Dendritic cell treated with granulocyte-macrophage colony-stimulating factor and Interleukin-4, amounts not matched to agents 40 ng/mL and 50 ng/mL, for 4 days (primary cell): ENCODE measurements at regions of chr3 and their contacts with region 1.

Region 1: DNA sequence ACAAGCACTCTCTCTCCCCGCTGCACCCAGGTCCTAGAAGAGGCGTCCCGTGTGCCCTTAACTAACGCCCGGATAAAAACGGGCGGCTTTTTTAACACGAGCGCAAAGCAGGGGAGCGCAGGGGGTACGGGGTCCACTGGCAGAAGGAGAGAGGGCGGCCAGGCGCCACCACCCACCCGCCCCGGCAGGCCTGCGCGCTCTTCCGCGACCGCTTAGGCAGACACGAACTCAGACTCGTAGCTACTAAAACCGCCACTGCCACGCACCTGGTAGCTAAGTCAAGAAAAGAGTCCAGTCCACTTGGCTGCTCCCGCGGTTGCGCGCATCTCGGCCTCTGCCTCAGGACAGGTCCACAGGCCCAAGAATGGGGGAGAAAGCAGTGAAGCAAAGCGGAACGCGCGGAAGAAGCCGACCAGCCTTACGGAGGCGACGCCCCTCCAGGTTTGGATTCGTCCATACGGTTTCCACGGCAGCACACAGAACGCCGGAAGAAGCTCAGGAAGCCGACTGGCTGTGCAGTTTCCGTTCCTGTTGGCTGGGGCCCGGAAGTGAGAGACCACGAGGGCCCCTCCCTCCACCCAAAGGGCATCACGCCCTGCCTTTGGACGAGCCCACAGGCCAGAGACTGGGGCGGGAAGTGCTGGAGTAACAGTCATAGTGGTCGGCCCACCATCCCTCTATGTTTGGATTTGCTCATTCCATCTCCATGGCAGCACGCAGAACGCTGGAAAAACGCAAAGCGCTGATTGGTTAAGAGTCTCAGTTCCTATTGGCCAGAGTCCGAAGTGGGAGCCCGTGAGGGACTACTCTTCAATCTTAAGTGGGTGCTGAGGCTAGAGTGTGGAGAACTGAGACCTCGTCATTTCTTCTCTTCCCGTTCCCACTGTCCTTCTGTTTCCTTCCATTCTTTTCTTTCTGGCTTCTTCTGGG is at the start of gene ULK4:
- H3K4me3 Mint-ChIP-seq: peak within 1 kb of the TSS; percentile 100
- H3K27ac Mint-ChIP-seq: peak within 1 kb of the TSS; percentile 97
- H3K4me1 Mint-ChIP-seq: peaks cover 23% of the 10 kb centered on the region
- H3K27me3 Mint-ChIP-seq: no peaks in the 10 kb centered on the region

Region 2: GRCh38 chr3:40309418-40309924 is 1652.5 kb before region 1 on chr3 and contains the start of gene EIF1B:
- intact Hi-C with region 1: loop called (anchors 5 kb)
- H3K4me3 Mint-ChIP-seq: peak within 1 kb of the TSS; percentile 98
- H3K27ac Mint-ChIP-seq: peak within 1 kb of the TSS; percentile 97
- H3K4me1 Mint-ChIP-seq: peaks cover 39% of the 10 kb centered on the region
- H3K27me3 Mint-ChIP-seq: no peaks in the 10 kb centered on the region

Region 3: GRCh38 chr3:42012935-42013690 is 51.1 kb after region 1 on chr3:
- intact Hi-C with region 1: loop called (anchors 1 kb)
- H3K4me3 Mint-ChIP-seq: peak overlapping the region; percentile 95
- H3K27ac Mint-ChIP-seq: peak overlapping the region; percentile 100
- H3K4me1 Mint-ChIP-seq: peaks cover 61% of the 10 kb centered on the region
- H3K27me3 Mint-ChIP-seq: no peaks in the 10 kb centered on the region

Region 4: DNA sequence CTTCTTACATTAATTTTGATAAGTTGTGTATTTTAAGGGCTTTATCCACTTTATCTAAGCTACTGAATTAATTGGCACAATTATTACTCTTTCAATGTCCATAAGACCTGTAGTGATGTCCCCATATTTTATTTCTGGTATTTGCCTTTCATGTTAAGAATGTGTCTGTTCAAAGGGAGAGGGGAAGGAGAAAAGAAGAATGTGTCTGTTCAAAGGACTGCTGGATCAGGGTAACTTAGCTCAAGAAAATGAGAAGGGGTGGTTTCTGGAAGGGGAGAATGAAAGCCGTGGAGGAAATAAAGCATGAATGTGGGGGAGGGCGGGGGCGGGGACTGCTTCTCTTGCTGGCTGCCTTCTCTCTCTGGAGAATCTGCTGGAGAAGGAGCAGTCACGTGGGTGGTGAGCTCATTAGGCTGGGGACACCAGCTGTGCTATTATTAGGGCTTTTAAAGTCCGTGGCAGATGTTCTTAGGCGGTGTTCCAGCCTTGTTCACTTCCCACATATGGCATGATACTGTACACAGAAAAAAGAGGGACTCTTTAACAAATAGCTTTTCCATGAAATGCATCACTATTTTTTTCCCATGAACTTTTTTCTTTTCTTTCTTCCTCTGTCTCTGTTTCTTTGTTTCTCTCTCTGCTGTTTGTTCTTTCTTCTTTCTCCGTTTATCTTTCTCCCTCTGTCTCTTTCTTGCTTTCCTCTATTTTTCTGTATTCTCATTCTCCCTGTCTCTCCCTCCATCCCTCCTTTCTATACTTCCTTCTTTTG is 63.5 kb after region 1 on chr3:
- intact Hi-C with region 1: loop called (anchors 1 kb)
- H3K4me3 Mint-ChIP-seq: peak overlapping the region; percentile 66
- H3K27ac Mint-ChIP-seq: peak overlapping the region; percentile 92
- H3K4me1 Mint-ChIP-seq: peaks cover 67% of the 10 kb centered on the region
- H3K27me3 Mint-ChIP-seq: no peaks in the 10 kb centered on the region

Region 5: DNA sequence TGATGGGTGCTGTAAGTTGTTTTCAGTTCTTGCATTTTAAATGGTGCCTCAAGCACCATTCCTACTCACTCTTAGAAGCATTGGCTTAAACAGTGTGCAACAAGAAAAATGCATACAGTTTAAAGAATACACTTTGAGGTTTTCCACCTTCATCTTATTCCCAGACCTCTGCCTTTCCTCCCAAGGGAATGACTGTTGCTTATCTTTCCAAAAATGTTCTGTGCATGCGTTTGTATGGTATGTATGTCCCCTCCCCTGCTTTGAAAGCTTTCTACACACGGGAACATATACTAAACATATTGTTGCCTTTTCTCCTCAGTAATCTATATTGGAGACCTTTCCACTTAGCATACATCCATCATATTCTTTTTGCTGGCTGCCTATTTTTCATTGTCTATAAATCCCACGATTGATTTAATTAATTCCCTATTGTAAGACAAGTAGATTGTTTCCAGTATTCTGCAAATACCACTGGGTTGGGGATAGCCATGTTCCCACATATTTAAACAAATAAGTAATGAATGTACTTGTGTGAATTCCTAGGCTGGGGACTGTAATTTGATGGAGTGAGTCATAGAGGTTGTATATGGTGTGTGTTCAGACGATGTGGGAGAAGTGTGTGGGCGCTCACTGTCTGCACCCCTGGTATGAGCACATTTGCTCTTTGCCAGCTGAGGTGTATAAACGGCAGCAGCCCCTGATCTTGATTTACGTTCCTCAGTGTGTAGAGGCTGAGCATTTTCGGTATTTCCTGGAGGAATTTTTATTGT is 135.0 kb after region 1 on chr3:
- intact Hi-C with region 1: loop called (anchors 1 kb)
- H3K4me3 Mint-ChIP-seq: no peak overlapping the region
- H3K27ac Mint-ChIP-seq: no peak overlapping the region
- H3K4me1 Mint-ChIP-seq: peaks cover 61% of the 10 kb centered on the region
- H3K27me3 Mint-ChIP-seq: no peaks in the 10 kb centered on the region

Region 6: DNA sequence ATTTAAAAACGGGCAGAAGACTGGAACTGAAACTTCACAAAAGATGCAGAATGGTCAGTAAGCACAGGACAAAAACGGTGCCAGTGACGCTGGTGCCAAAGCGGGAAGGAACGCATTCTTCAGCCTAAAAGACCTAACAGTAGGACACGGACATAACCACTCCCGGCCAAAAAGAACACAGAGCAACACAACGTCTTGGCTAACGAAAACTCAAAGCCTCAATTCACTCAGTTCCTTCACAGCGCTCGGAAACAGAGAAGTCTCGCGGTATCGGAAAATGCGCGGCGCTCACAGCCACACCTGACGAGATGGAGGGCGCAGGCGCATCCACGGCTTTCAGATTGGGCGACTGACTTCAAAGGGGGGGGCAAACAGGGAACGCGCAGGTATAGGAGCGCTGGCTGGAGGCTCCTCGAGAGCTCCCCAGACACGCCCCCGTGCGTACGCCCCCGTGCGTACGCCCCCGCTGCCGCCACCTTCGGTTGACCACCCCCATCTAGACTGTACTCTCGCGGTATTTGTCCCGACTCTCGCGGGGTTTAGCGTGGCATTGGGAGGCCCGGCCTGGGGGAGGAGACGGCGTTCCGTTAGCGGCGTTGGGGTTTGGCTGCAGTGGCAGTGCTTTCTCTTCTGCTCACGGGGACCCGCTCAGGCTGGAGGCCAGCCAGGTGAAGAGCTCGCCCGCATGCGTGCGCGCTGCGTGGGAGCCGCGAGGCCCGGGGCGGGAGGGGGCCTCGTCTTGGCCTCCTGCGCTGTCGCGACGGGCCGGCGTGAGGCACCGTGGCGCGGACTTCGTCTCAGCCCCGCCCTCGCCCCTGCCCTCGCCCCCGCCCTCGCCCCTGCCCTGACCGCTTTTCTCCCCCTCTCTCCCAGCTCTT is 638.3 kb after region 1 on chr3 and contains the start of gene NKTR:
- intact Hi-C with region 1: loop called (anchors 5 kb)
- H3K4me3 Mint-ChIP-seq: peak within 1 kb of the TSS; percentile 89
- H3K27ac Mint-ChIP-seq: peak within 1 kb of the TSS; percentile 99
- H3K4me1 Mint-ChIP-seq: peaks cover 22% of the 10 kb centered on the region
- H3K27me3 Mint-ChIP-seq: no peaks in the 10 kb centered on the region